ENCODE measurements at regions of chr7 and their contacts with region 1.

Region 1: GRCh38 chr7:128387216-128388144 is 22.3 kb downstream of the IMPDH1 start:
- DNase-seq: peak; percentile 93

Region 2: GRCh38 chr7:128415217-128415785 is 27.8 kb after region 1 on chr7:
- CTCF ChIA-PET with region 1: interaction called, 13 read pairs
- POLR2A ChIA-PET with region 1: no interaction called
- DNase-seq: no peak